CD4-positive, alpha-beta T cell (primary cell): ENCODE measurements at regions of chr3 and their contacts with region 1.

Region 1: DNA sequence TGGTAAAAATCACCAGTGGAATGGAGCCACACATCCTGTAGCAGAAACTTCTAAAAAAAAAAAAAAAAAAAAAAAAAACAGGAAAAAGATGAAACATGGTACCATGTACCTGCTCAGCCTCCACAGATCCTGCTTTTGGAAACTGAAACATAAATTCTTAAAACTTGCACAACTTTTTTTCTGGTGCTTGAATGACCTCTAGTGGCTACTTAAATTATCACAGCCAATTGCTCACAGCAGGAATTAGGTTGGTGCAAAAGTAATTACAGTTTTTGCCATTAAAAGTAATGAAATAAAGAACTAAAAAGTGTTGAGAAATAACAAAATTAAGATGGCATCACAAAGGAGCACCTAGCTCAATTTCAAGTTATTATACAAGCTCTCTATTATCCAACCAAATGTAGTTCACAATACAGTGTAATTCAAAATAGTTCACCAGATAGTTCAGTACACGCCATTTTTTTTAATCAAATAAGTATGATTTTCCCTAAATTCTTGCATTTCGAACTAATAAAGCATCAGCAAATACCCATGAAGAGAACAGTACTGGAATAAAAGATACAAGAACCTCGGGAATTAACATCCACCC is 80.6 kb downstream of the ULK4 start:
- DNase-seq: peak in 4 of 14 experiments; percentile 6 to 65 (median 62)
- ATAC-seq: no peak
- H3K4me3 ChIP-seq: no peak overlapping the region
- H3K4me3 Mint-ChIP-seq: no peak overlapping the region
- H3K27ac ChIP-seq: no peak overlapping the region
- H3K27ac Mint-ChIP-seq: no peak overlapping the region
- H3K4me1 ChIP-seq: no peaks in the 10 kb centered on the region
- H3K4me1 Mint-ChIP-seq: no peaks in the 10 kb centered on the region
- H3K27me3 ChIP-seq: no peaks in the 10 kb centered on the region
- H3K27me3 Mint-ChIP-seq: no peaks in the 10 kb centered on the region
- CTCF ChIP-seq: peak; percentile 81

Region 2: DNA sequence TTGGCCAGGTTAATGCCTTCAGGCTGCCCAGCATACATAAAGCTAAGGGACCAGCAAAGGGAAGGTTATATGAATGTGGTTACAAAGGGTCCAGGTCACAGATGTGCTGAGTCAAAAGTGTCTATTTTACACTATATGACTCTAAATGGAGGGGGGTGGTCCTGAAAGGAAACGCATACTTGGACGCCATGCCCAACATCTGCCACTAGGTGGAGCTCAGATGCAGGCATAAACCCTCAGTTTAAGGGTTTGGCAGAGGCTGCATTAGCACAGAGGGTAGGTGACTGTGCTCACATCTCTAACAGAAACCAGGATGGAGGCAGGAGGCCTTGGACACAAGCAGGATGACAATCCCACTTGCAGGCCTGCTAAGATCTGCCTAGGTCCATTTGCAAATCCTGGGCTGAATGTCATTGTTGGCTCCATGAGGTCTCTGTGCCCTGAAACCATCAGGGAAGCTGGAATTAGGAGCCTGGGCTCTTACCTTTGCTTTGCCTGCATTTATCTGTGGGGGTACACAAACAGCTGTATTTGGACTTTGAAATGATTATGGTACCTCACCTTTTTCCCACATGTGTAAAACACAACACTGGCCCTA is 1300.7 kb before region 1 on chr3:
- CTCF ChIA-PET with region 1: interaction called, 9 read pairs
- POLR2A ChIA-PET with region 1: no interaction called
- intact Hi-C with region 1: loop called (anchors 1 kb)
- DNase-seq: peak; percentile 38 to 75 (median 49)
- ATAC-seq: peak; percentile 76
- H3K4me3 ChIP-seq: no peak overlapping the region
- H3K4me3 Mint-ChIP-seq: no peak overlapping the region
- H3K27ac ChIP-seq: no peak overlapping the region
- H3K27ac Mint-ChIP-seq: no peak overlapping the region
- H3K4me1 ChIP-seq: peaks cover 3% of the 10 kb centered on the region
- H3K4me1 Mint-ChIP-seq: no peaks in the 10 kb centered on the region
- H3K27me3 ChIP-seq: peaks cover 0 to 2% of the 10 kb centered on the region in 2 experiments
- H3K27me3 Mint-ChIP-seq: peaks cover 8% of the 10 kb centered on the region
- CTCF ChIP-seq: peak; percentile 89

Region 3: GRCh38 chr3:41833628-41834027 is 47.7 kb before region 1 on chr3:
- CTCF ChIA-PET with region 1: no interaction called
- POLR2A ChIA-PET with region 1: no interaction called
- intact Hi-C with region 1: no loop called
- DNase-seq: no peak
- ATAC-seq: no peak
- H3K4me3 ChIP-seq: no peak overlapping the region
- H3K4me3 Mint-ChIP-seq: no peak overlapping the region
- H3K27ac ChIP-seq: no peak overlapping the region
- H3K27ac Mint-ChIP-seq: no peak overlapping the region
- H3K4me1 ChIP-seq: no peaks in the 10 kb centered on the region
- H3K4me1 Mint-ChIP-seq: no peaks in the 10 kb centered on the region
- H3K27me3 ChIP-seq: no peaks in the 10 kb centered on the region
- H3K27me3 Mint-ChIP-seq: no peaks in the 10 kb centered on the region
- CTCF ChIP-seq: no peak

Region 4: GRCh38 chr3:41893977-41894376 is 12.7 kb after region 1 on chr3:
- CTCF ChIA-PET with region 1: no interaction called
- POLR2A ChIA-PET with region 1: no interaction called
- intact Hi-C with region 1: no loop called
- DNase-seq: peak in 4 of 14 experiments; percentile 30 to 59 (median 51)
- ATAC-seq: no peak
- H3K4me3 ChIP-seq: no peak overlapping the region
- H3K4me3 Mint-ChIP-seq: no peak overlapping the region
- H3K27ac ChIP-seq: no peak overlapping the region
- H3K27ac Mint-ChIP-seq: no peak overlapping the region
- H3K4me1 ChIP-seq: no peaks in the 10 kb centered on the region
- H3K4me1 Mint-ChIP-seq: no peaks in the 10 kb centered on the region
- H3K27me3 ChIP-seq: no peaks in the 10 kb centered on the region
- H3K27me3 Mint-ChIP-seq: no peaks in the 10 kb centered on the region
- CTCF ChIP-seq: peak; percentile 74